CD8-positive, alpha-beta T cell (primary cell): ENCODE measurements at regions of chr16 and their contacts with region 1.

Region 1: DNA sequence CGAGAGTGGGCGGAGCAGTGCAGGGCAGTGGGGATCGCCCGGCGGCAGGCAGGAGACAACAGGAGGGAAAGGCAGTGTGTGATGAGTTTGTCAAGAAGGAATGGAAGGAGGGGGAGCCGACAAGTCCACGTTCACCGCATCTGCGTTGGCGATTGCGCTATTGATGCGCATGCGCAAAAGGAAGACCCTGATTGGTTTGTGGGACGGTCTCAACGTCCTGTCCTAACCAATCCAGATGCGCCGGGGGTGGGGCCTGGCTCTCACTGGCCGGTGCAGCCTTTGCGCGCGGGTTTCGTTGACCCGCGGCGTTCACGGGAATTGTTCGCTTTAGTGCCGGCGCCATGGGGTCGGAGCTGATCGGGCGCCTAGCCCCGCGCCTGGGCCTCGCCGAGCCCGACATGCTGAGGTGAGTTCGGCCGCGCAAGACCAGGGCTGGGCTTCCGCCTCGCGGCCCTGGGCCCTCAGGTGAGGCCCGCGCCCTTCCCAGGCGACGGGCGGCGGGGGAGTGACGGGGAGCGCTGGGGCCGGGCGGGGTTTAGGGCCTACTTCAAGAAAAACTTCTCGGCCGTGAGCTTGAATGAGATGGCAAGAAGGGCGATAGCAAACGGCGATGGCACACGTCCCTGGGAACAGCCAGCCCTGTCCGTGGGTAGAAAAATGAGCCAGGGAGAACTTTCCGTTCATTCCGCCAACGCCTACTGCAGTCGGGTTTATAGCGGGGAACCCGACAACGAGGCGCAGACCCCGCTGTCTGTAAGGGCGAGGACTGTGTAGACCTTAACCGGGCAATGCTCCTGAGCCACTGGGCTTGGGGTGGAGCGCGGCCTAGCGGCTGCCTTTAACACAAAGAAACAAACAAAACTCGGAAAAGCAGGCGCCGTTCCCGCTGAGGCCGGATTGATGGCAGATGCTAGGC is at the start of gene ORC6:
- DNase-seq: peak; percentile 93 to 98 (median 96)
- ATAC-seq: peak; percentile 73
- H3K4me3 ChIP-seq: peak within 1 kb of the TSS; percentile 90 to 98
- H3K4me3 Mint-ChIP-seq: no peak within 1 kb of the TSS
- H3K27ac ChIP-seq: peak within 1 kb of the TSS; percentile 95
- H3K27ac Mint-ChIP-seq: no peak within 1 kb of the TSS
- H3K4me1 ChIP-seq: peaks cover 28% of the 10 kb centered on the region
- H3K4me1 Mint-ChIP-seq: peaks cover 31% of the 10 kb centered on the region
- H3K27me3 ChIP-seq: no peaks in the 10 kb centered on the region
- H3K27me3 Mint-ChIP-seq: no peaks in the 10 kb centered on the region
- CTCF ChIP-seq: peak; percentile 45
- total RNA-seq, gene ORC6: 4.7 to 5.7 TPM

Region 2: DNA sequence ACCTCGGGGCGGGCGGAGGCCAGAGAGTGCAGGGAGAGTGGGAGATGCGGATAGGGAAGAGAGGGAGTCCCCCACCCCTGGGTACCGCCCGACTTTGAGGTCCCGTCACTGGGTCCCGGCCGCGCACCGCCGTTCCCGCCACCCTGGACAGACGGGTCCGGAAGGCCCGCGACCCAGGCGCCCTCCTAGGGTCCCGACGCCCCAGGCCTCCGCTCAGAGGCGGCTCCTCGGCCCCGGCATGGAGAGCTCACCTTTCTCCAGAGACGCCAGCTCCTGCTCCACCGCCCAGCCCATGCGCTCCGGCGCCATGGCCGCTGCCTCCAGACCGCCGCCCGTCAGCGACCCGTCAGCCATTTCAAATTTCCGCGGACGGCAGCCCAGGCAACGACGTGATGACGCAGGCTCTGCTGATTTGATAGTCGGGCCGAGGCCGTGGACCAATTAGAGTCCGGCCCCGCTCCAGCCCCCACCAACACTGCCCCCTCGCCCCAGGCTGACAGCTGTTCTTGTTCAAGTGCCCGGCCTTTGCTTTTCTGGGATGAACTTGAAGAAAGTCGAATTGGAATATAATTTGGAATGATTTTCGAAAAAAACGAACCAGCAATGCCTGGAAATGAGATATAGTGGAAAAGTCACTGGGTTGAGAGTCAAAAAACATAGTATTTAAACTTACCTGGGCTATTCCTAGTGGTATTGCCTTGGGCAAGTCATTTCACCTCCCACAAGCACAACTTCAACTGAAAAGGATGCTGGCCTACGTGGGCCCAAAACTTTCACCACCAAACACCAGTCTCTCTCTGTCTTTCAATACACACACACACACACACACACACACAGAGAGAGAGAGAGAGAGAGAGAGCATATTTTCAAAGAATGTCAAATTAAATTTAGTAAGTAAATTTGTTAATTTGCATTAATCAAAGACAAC is 68.4 kb before region 1 on chr16 and contains the start of gene SHCBP1:
- CTCF ChIA-PET with region 1: no interaction called
- POLR2A ChIA-PET with region 1: no interaction called
- intact Hi-C with region 1: loop called in 1 of 2 experiments (anchors 2 kb)
- DNase-seq: peak; percentile 19 to 78 (median 55)
- ATAC-seq: peak; percentile 80
- H3K4me3 ChIP-seq: peak within 1 kb of the TSS; percentile 41 to 44
- H3K4me3 Mint-ChIP-seq: peak within 1 kb of the TSS; percentile 84
- H3K27ac ChIP-seq: no peak within 1 kb of the TSS
- H3K27ac Mint-ChIP-seq: no peak within 1 kb of the TSS
- H3K4me1 ChIP-seq: peaks cover 10% of the 10 kb centered on the region
- H3K4me1 Mint-ChIP-seq: peaks cover 11% of the 10 kb centered on the region
- H3K27me3 ChIP-seq: peaks cover 0 to 2% of the 10 kb centered on the region in 2 experiments
- H3K27me3 Mint-ChIP-seq: peaks cover 5% of the 10 kb centered on the region
- CTCF ChIP-seq: no peak
- total RNA-seq, gene SHCBP1: 0.52 to 1.3 TPM

Region 3: GRCh38 chr16:46830902-46831647 is 141.5 kb after region 1 on chr16 and contains the start of gene C16orf87:
- CTCF ChIA-PET with region 1: no interaction called
- POLR2A ChIA-PET with region 1: no interaction called
- intact Hi-C with region 1: loop called (anchors 1 kb)
- DNase-seq: peak; percentile 85 to 96 (median 90)
- ATAC-seq: peak; percentile 92
- H3K4me3 ChIP-seq: peak within 1 kb of the TSS; percentile 61 to 74
- H3K4me3 Mint-ChIP-seq: peak within 1 kb of the TSS; percentile 94
- H3K27ac ChIP-seq: peak within 1 kb of the TSS; percentile 62 to 73
- H3K27ac Mint-ChIP-seq: peak within 1 kb of the TSS; percentile 96
- H3K4me1 ChIP-seq: peaks cover 9% of the 10 kb centered on the region
- H3K4me1 Mint-ChIP-seq: peaks cover 27% of the 10 kb centered on the region
- H3K27me3 ChIP-seq: no peaks in the 10 kb centered on the region
- H3K27me3 Mint-ChIP-seq: no peaks in the 10 kb centered on the region
- CTCF ChIP-seq: no peak
- total RNA-seq, gene C16orf87: 13.9 to 14.0 TPM

Region 4: GRCh38 chr16:47037746-47038458 is 348.3 kb after region 1 on chr16:
- CTCF ChIA-PET with region 1: interaction called, 3 read pairs
- POLR2A ChIA-PET with region 1: no interaction called
- intact Hi-C with region 1: loop called in 1 of 2 experiments (anchors 5 kb)
- DNase-seq: peak; percentile 80 to 95 (median 88)
- ATAC-seq: peak; percentile 98
- H3K4me3 ChIP-seq: peak overlapping the region; percentile 65 to 72
- H3K4me3 Mint-ChIP-seq: peak overlapping the region; percentile 79
- H3K27ac ChIP-seq: no peak overlapping the region
- H3K27ac Mint-ChIP-seq: no peak overlapping the region
- H3K4me1 ChIP-seq: peaks cover 7% of the 10 kb centered on the region
- H3K4me1 Mint-ChIP-seq: peaks cover 5% of the 10 kb centered on the region
- H3K27me3 ChIP-seq: peaks cover 0 to 12% of the 10 kb centered on the region in 2 experiments
- H3K27me3 Mint-ChIP-seq: peaks cover 3% of the 10 kb centered on the region
- CTCF ChIP-seq: peak; percentile 88

Region 5: GRCh38 chr16:47460711-47461597 is 771.3 kb after region 1 on chr16 and contains the starts of genes ITFG1 and PHKB:
- CTCF ChIA-PET with region 1: no interaction called
- POLR2A ChIA-PET with region 1: no interaction called
- intact Hi-C with region 1: loop called in 1 of 2 experiments (anchors 5 kb)
- DNase-seq: peak; percentile 91 to 97 (median 95)
- ATAC-seq: peak; percentile 95
- H3K4me3 ChIP-seq: peak within 1 kb of the TSS; percentile 77 to 87
- H3K4me3 Mint-ChIP-seq: peak within 1 kb of the TSS; percentile 99
- H3K27ac ChIP-seq: peak within 1 kb of the TSS; percentile 77 to 95
- H3K27ac Mint-ChIP-seq: peak within 1 kb of the TSS; percentile 95
- H3K4me1 ChIP-seq: peaks cover 33% of the 10 kb centered on the region
- H3K4me1 Mint-ChIP-seq: peaks cover 72% of the 10 kb centered on the region
- H3K27me3 ChIP-seq: no peaks in the 10 kb centered on the region
- H3K27me3 Mint-ChIP-seq: no peaks in the 10 kb centered on the region
- CTCF ChIP-seq: no peak
- total RNA-seq, gene ITFG1: 13.2 to 16.8 TPM
- total RNA-seq, gene PHKB: 32.4 to 32.8 TPM

Region 6: GRCh38 chr16:47732523-47733111 is 1043.0 kb after region 1 on chr16:
- CTCF ChIA-PET with region 1: no interaction called
- POLR2A ChIA-PET with region 1: no interaction called
- intact Hi-C with region 1: no loop called
- DNase-seq: no peak
- ATAC-seq: no peak
- H3K4me3 ChIP-seq: no peak overlapping the region
- H3K4me3 Mint-ChIP-seq: no peak overlapping the region
- H3K27ac ChIP-seq: no peak overlapping the region
- H3K27ac Mint-ChIP-seq: no peak overlapping the region
- H3K4me1 ChIP-seq: no peaks in the 10 kb centered on the region
- H3K4me1 Mint-ChIP-seq: no peaks in the 10 kb centered on the region
- H3K27me3 ChIP-seq: no peaks in the 10 kb centered on the region
- H3K27me3 Mint-ChIP-seq: peaks cover 5% of the 10 kb centered on the region
- CTCF ChIP-seq: no peak

Region 7: DNA sequence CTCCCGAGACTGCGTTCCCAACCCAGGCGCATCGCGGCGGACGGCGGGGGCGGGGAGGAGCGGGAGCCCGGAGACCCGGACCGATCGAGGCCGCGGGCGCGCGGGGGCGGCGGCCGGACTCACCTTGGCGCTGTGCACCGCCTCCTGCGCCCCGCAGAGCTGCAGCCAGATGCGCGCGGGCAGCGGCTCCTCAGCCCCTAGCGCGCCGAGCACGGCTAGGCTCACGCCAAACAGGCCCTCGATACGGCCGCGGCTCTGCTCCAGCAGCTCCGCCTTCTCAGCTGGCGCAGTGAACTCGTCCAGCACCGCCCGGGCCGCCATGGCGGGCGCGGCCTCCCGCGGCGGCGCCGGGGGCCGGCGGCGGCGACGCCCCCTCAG is 1920.0 kb after region 1 on chr16:
- CTCF ChIA-PET with region 1: no interaction called
- POLR2A ChIA-PET with region 1: no interaction called
- intact Hi-C with region 1: loop called (anchors 2 to 5 kb)
- DNase-seq: no peak
- ATAC-seq: peak; percentile 17
- H3K4me3 ChIP-seq: peak overlapping the region; percentile 81 to 88
- H3K4me3 Mint-ChIP-seq: peak overlapping the region; percentile 86
- H3K27ac ChIP-seq: peak overlapping the region; percentile 72 to 87
- H3K27ac Mint-ChIP-seq: peak overlapping the region; percentile 94
- H3K4me1 ChIP-seq: peaks cover 79% of the 10 kb centered on the region
- H3K4me1 Mint-ChIP-seq: peaks cover 40% of the 10 kb centered on the region
- H3K27me3 ChIP-seq: no peaks in the 10 kb centered on the region
- H3K27me3 Mint-ChIP-seq: no peaks in the 10 kb centered on the region
- CTCF ChIP-seq: no peak